RWPE1 (cell line): ENCODE measurements at regions of chr17 and their contacts with region 1.

Region 1: DNA sequence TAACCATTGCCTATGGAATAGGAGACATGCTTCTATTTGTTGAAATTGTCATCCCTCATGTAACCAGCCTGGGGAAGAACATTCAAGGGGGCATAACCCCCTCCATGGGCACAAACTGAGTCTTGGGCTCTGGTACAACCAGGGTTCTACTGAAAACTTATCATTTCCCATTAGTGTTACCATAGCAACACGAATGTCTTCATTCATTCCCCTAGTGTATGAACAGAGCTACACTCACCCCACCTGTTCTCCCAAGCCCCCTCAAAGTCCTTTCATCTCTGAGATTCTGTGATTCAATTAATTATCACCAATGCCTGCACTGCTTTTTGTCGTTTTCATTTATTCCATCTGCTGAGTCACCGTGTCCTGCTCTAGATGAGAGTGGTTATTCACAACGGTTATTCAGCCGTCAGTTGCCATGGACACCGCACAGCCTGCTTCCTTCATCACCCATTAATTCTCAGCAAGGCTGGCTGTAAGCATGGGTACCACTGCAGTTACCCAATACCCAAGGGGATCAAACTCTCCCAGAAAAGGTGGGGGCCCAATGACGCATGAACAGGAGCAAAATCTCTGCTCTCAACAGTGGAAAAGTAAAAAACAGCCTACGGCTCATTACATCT is 1.6 kb upstream of the GAST start:
- DNase-seq: no peak
- H3K27ac ChIP-seq: no peak overlapping the region
- CTCF ChIP-seq: no peak

Region 2: DNA sequence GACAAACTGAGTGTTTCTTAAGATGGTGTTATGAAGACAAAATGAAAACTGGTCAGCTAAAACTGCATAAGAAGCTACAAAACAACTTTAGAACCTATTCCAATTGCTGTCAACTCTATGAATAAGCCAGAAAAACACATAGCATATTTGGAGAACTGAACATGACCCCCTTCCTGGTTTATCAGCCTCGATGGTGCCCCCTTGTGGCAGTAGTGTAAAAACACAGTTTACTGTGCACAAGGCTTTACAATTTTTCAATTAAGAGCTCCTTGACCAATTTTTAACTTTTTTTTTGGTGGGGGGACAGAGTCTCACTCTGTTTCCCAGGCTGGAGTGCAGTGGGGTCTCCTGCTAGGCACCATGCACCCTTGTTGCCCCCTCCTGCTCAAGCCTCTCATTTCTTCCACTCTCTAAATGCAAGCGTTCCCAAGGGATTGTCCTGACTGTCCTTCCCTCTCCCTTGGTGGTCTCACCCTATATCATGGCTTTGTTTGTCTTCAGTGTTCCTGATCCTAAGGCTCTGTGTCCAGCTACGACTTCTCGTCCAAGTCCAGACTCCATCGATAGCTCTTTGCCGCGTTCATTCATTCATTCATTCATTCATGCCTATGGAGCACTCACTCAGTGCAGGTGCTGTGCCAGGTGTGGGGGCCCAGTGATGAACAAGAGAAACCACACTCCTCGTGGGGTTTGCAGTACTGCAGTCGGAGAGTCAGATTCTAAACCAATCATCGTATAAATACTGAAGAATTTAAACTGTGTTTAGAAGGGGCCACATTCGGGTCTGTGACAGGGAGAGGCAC is 14.4 kb before region 1 on chr17:
- CTCF ChIA-PET with region 1: interaction called, 14 read pairs
- POLR2A ChIA-PET with region 1: interaction called, 5 read pairs
- DNase-seq: peak; percentile 77
- H3K27ac ChIP-seq: peak overlapping the region; percentile 64; the same call in 1 of the 2 replicates
- CTCF ChIP-seq: peak; percentile 85